ENCODE measurements at regions of chr16 and their contacts with region 1.

Region 1: GRCh38 chr16:16075488-16076422 is 126.3 kb downstream of the ABCC1 start:
- DNase-seq: peak; percentile 88

Region 2: GRCh38 chr16:16025214-16025968 is 50.4 kb before region 1 on chr16:
- intact Hi-C with region 1: loop called in 1 of 2 experiments (anchors 5 kb)
- DNase-seq: no peak

Region 3: GRCh38 chr16:16158741-16159374 is 83.1 kb after region 1 on chr16:
- intact Hi-C with region 1: no loop called
- DNase-seq: no peak